ENCODE measurements at regions of chr6 and their contacts with region 1.

Region 1: GRCh38 chr6:2853761-2854395 is 12.2 kb upstream of the SERPINB1 start:
- DNase-seq: peak in 2 of 3 donors; percentile 55 to 67
- ATAC-seq: peak; percentile 9
- H3K4me3 ChIP-seq: peak overlapping the region; percentile 46
- H3K27ac ChIP-seq: peak overlapping the region; percentile 86
- H3K4me1 ChIP-seq: peaks cover 15% of the 10 kb centered on the region
- H3K27me3 ChIP-seq: no peaks in the 10 kb centered on the region

Region 2: GRCh38 chr6:2563635-2564034 is 290.2 kb before region 1 on chr6:
- intact Hi-C with region 1: no loop called
- DNase-seq: no peak
- ATAC-seq: peak in 1 of 2 donors; percentile 32
- H3K4me3 ChIP-seq: no peak overlapping the region
- H3K27ac ChIP-seq: no peak overlapping the region
- H3K4me1 ChIP-seq: no peaks in the 10 kb centered on the region
- H3K27me3 ChIP-seq: no peaks in the 10 kb centered on the region

Region 3: GRCh38 chr6:2900821-2901644 is 47.2 kb after region 1 on chr6:
- intact Hi-C with region 1: loop called in 1 of 4 experiments (anchors 10 kb)
- DNase-seq: peak; percentile 29 to 69 (median 62)
- ATAC-seq: peak in 1 of 2 donors; percentile 16
- H3K4me3 ChIP-seq: no peak overlapping the region
- H3K27ac ChIP-seq: no peak overlapping the region
- H3K4me1 ChIP-seq: peaks cover 7% of the 10 kb centered on the region
- H3K27me3 ChIP-seq: no peaks in the 10 kb centered on the region

Region 4: GRCh38 chr6:2911171-2911570 is 57.3 kb after region 1 on chr6:
- intact Hi-C with region 1: loop called in 2 of 4 experiments (anchors 10 kb)
- DNase-seq: no peak
- ATAC-seq: no peak
- H3K4me3 ChIP-seq: no peak overlapping the region
- H3K27ac ChIP-seq: no peak overlapping the region
- H3K4me1 ChIP-seq: peaks cover under 1% of the 10 kb centered on the region
- H3K27me3 ChIP-seq: no peaks in the 10 kb centered on the region

Region 5: DNA sequence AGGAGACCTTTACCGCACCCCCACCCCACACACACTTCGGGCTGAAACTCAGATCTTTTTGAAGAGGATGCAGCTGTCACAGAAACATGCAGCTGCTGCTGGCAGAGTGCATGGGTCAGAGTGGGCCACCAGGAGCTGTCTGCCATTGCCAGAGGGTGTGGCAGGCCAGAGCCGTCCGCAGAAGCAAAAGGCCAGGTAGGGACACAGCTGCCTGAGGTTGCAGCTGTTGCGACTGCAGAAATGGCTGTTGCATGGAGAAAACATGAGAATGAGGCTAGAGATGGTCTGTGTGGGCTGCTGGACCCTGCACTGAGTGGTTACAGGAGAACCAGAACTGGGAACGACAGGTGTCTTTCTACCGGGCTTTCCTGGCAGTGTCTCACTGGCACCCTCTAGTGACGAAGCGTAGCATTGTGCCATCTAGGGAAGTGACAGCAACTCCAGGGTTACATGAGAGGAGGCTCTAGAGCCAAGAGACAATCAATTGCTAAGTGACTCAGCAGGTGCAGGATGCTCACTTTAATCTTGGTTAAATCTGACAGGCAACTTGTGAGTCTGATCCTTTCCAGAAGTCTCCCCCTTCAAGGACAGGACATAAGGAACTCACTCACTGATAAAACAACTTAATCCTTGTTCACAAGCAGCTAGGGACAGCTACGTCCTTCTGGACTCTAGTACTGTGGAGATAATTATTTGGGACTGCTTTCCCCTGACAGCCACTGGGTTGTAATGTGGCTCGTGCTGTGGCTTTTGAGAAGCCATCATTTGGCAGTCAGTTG is 78.3 kb after region 1 on chr6:
- intact Hi-C with region 1: loop called in 3 of 4 experiments (anchors 5 kb)
- DNase-seq: peak; percentile 72 to 92 (median 86)
- ATAC-seq: peak; percentile 92 to 94
- H3K4me3 ChIP-seq: no peak overlapping the region
- H3K27ac ChIP-seq: peak overlapping the region; percentile 31
- H3K4me1 ChIP-seq: peaks cover 3% of the 10 kb centered on the region
- H3K27me3 ChIP-seq: no peaks in the 10 kb centered on the region

Region 6: DNA sequence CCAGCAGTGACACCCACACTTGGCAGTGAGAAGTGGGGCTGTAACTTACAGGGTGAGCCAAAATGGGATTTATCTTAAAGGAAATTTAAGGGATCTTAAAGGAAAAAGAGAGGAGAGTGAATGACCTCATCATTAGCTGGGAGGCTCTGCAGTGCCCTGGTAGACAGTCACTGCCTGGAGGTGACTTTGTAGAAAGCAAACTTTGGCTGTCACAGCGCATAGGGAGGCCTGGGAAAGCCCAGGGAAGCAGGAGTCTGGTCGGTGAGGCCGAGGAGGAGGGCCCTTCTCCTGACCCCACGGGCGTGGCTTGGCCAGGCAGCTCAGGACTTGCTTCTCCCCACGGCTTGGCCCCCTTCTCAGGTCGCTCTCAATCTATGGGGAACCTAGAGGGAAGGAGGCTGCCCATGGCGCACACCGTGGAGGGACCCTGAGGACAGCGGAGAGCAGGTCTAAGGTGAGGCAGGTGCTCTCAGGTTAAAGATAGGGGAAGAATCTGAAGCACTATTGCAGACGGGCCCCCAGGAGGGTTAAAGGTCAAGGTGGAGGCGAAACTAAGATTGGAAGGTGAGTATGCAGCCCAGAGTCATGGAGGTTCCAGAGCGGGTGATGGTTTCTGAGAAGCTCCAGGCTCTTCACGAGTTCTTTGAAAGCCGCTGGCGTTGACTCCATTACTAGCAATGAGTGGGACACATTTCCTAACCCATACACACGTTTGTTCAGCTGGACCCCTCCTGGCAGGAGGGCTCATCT is 198.8 kb after region 1 on chr6:
- intact Hi-C with region 1: loop called in 2 of 4 experiments (anchors 10 kb)
- DNase-seq: peak in 1 of 3 donors; percentile 64
- ATAC-seq: no peak
- H3K4me3 ChIP-seq: no peak overlapping the region
- H3K27ac ChIP-seq: no peak overlapping the region
- H3K4me1 ChIP-seq: peaks cover 2% of the 10 kb centered on the region
- H3K27me3 ChIP-seq: no peaks in the 10 kb centered on the region